A673 (cell line): ENCODE measurements at regions of chr3 and their contacts with region 1.

Region 1: GRCh38 chr3:19885468-19885867 is 48.5 kb downstream of the EFHB start:
- DNase-seq: peak; percentile 72
- H3K4me3 ChIP-seq: no peak overlapping the region
- H3K27ac ChIP-seq: no peak overlapping the region
- H3K4me1 ChIP-seq: peaks cover 23% of the 10 kb centered on the region
- H3K27me3 ChIP-seq: no peaks in the 10 kb centered on the region
- CTCF ChIP-seq: peak; percentile 73

Region 2: GRCh38 chr3:19946832-19947548 is 61.5 kb after region 1 on chr3 and contains the start of gene RAB5A:
- CTCF ChIA-PET with region 1: no interaction called
- POLR2A ChIA-PET with region 1: no interaction called
- intact Hi-C with region 1: loop called (anchors 2 kb)
- DNase-seq: peak; percentile 99
- H3K4me3 ChIP-seq: peak within 1 kb of the TSS; percentile 90
- H3K27ac ChIP-seq: peak within 1 kb of the TSS; percentile 93
- H3K4me1 ChIP-seq: peaks cover 7% of the 10 kb centered on the region
- H3K27me3 ChIP-seq: no peaks in the 10 kb centered on the region
- CTCF ChIP-seq: no peak
- total RNA-seq, gene RAB5A: 49.7 and 50.1 TPM in 2 replicates

Region 3: DNA sequence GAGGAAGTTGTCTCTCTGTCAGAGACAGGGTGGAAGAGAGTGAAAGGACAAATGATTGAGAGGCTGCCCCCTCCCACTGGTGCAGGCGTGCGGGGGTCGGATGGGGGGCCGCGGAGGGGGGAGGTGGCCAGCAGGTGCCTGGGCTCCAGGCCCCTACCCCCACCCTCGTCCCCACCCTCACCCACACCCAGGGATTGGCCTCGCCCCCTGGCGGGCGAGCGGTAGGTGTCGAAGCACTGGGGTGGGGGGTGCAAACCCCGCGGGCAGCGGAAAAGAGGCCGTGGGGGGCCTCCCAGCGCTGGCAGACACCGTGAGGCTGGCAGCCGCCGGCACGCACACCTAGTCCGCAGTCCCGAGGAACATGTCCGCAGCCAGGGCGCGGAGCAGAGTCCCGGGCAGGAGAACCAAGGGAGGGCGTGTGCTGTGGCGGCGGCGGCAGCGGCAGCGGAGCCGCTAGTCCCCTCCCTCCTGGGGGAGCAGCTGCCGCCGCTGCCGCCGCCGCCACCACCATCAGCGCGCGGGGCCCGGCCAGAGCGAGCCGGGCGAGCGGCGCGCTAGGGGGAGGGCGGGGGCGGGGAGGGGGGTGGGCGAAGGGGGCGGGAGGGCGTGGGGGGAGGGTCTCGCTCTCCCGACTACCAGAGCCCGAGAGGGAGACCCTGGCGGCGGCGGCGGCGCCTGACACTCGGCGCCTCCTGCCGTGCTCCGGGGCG is 154.5 kb after region 1 on chr3 and contains the start of gene KAT2B:
- CTCF ChIA-PET with region 1: no interaction called
- POLR2A ChIA-PET with region 1: no interaction called
- intact Hi-C with region 1: loop called (anchors 5 kb)
- DNase-seq: peak; percentile 78
- H3K4me3 ChIP-seq: peak within 1 kb of the TSS; percentile 76
- H3K27ac ChIP-seq: peak within 1 kb of the TSS; percentile 70
- H3K4me1 ChIP-seq: peaks cover 7% of the 10 kb centered on the region
- H3K27me3 ChIP-seq: no peaks in the 10 kb centered on the region
- CTCF ChIP-seq: peak; percentile 72
- total RNA-seq, gene KAT2B: 4.6 and 5.4 TPM in 2 replicates

Region 4: DNA sequence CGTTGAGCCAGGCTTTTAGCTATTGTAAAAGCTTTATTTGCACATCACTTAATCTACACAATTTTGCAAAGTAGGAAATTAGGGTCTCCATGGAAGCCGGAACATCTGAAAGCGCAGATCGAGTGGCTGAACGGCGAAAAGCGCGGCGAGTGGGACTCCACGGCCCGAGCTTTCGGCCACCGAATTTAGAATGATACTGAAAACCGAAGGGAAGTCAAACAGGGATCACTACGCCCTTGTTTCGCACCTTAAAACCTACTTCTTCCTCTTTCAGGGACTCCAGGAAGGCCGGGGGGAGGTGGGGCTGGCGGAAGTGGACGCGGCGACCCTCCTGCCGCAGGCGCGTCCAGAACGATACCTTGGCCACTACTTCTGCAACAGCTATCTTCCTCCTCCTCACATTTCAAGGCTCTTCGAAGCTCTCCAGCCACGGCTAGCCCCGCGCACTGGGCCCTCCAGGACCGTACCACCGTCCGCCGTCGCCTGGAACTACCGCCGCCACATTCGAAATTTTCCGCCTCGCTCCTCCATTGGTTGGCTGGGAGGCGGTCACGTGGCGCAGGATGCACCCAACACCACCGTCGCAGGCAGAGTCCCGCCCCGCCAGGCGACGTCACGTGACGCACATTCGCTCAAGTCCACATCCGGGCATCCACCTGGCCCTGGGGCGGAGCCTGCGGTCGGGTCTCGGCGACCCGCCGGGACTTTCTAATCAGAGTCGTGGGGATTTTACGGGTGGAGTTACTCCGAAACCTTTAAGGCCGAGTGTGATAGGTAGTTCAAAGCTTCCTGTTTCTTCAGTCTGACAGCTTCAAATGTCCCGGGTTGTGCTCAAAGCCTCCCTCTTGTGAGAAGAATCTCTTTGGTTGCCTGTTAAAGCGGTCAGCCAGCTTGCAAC is 300.5 kb after region 1 on chr3 and contains the start of gene SGO1:
- CTCF ChIA-PET with region 1: no interaction called
- POLR2A ChIA-PET with region 1: no interaction called
- intact Hi-C with region 1: loop called (anchors 5 kb)
- DNase-seq: peak; percentile 98
- H3K4me3 ChIP-seq: peak within 1 kb of the TSS; percentile 82
- H3K27ac ChIP-seq: peak within 1 kb of the TSS; percentile 91
- H3K4me1 ChIP-seq: peaks cover 9% of the 10 kb centered on the region
- H3K27me3 ChIP-seq: no peaks in the 10 kb centered on the region
- CTCF ChIP-seq: no peak
- total RNA-seq, gene SGO1: 31.4 and 31.7 TPM in 2 replicates